ENCODE measurements at regions of chr3 and their contacts with region 1.

Region 1: DNA sequence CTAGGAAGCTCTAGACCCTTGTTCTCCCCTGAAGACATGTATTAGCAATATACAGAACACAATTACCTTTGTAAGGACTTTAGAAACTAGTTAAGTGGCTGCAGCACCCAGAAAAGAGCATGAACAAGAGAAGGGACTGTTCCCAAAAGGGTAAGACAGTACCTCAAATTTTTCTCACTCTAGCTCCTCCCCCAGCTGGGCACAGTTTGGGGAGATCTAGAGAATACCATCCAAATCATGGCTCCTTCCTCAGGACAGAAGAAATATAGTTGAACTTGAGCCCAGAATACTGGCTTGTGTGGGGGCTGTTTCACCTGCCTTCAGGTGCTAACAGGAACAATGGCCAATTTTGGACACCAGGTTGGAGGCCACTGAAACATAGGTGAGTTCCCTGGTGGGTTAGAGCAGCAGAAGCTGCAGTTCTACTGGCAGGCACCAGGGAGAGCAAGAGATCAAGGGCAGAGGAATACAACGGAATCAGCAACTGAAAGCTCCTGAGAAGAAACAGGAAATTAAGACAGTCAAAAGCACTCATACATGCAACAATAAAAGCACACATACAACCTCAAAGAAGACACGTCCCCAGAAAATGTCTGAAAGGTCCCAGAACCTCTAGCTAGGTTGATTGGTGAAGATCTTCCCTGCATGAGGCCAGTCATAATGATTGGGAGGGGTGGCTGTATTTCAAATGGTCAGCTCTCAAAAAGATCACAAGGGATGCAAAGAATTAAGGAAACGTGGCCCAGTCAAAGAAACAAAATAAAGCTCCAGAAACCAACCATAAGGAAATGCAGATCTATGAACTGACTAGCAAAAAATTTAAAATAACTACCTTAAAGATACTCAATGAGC is 104.9 kb upstream of the ASB14 start:
- DNase-seq: peak; percentile 62
- ATAC-seq: peak; percentile 99
- H3K4me3 Mint-ChIP-seq: no peak overlapping the region
- H3K27ac Mint-ChIP-seq: peak overlapping the region; percentile 73
- H3K4me1 Mint-ChIP-seq: peaks cover 14% of the 10 kb centered on the region
- H3K27me3 Mint-ChIP-seq: peaks cover 2% of the 10 kb centered on the region
- CTCF ChIP-seq: peak; percentile 87

Region 2: GRCh38 chr3:57382933-57383332 is 14.5 kb before region 1 on chr3:
- CTCF ChIA-PET with region 1: interaction called, 16 read pairs
- POLR2A ChIA-PET with region 1: no interaction called
- intact Hi-C with region 1: no loop called
- DNase-seq: no peak
- ATAC-seq: no peak
- H3K4me3 Mint-ChIP-seq: no peak overlapping the region
- H3K27ac Mint-ChIP-seq: no peak overlapping the region
- H3K4me1 Mint-ChIP-seq: no peaks in the 10 kb centered on the region
- H3K27me3 Mint-ChIP-seq: peaks cover 4% of the 10 kb centered on the region
- CTCF ChIP-seq: no peak

Region 3: DNA sequence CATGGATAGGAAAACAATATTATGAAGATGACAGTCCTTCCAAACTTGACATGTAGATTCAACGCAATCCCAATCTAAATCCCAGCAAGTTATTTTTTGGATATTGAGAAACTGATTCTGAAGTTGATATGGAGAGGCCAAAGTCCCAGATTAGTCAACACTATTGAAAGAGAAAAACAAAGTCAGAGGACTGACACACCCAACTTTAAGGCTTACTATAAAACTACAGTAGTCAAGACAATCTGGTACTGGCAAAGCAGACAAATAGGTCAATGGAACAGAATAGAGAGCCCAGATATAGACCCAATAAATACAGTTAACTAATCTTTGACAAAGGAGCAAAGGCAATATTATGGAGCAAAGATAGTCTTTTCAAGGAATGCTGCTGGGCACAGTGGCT is 14.3 kb after region 1 on chr3:
- CTCF ChIA-PET with region 1: interaction called, 16 read pairs
- POLR2A ChIA-PET with region 1: no interaction called
- intact Hi-C with region 1: no loop called
- DNase-seq: no peak
- ATAC-seq: no peak
- H3K4me3 Mint-ChIP-seq: no peak overlapping the region
- H3K27ac Mint-ChIP-seq: no peak overlapping the region
- H3K4me1 Mint-ChIP-seq: no peaks in the 10 kb centered on the region
- H3K27me3 Mint-ChIP-seq: peaks cover 2% of the 10 kb centered on the region
- CTCF ChIP-seq: no peak

Region 4: DNA sequence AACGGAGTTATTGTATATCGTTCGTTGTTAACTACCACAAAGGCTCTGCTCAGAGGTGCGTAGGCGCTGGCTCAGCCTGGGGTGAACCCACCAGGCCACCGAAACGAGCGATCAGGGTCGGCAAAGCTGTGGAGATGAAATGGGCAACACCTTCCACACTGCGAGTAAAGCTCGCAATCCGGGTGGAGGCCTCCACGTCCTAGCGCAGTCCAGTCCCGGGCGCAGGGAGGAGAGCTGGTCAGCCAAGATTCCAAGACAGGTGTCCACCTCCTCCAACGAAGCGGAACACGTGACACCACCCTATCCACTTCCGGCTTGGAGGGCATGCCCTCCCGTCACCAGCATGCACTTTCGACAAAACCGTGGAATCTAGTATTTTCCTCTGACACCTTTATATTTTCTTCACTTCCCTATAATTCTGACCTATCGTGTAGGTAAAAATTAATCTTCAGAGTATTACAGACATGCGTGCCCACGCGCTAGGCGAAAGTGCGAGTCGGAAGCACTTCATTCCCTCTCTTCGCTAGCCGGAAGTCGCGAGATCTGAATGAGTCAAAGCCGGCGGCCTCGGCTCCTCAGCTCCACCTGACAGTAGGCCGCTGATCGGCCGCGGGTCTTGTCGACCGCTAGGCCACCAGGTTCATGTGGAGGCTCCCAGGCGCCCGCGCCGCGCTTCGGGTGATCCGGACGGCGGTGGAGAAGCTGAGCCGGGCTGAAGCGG is 158.5 kb after region 1 on chr3 and contains the start of gene PDE12:
- CTCF ChIA-PET with region 1: interaction called, 14 read pairs
- POLR2A ChIA-PET with region 1: no interaction called
- intact Hi-C with region 1: no loop called
- DNase-seq: peak; percentile 91
- ATAC-seq: peak; percentile 80
- H3K4me3 Mint-ChIP-seq: peak within 1 kb of the TSS; percentile 99
- H3K27ac Mint-ChIP-seq: peak within 1 kb of the TSS; percentile 99
- H3K4me1 Mint-ChIP-seq: peaks cover 24% of the 10 kb centered on the region
- H3K27me3 Mint-ChIP-seq: no peaks in the 10 kb centered on the region
- CTCF ChIP-seq: no peak
- total RNA-seq, gene PDE12: 25.4 to 29.9 TPM

Region 5: GRCh38 chr3:57852896-57853295 is 455.5 kb after region 1 on chr3:
- CTCF ChIA-PET with region 1: interaction called, 18 read pairs
- POLR2A ChIA-PET with region 1: no interaction called
- intact Hi-C with region 1: no loop called
- DNase-seq: no peak
- ATAC-seq: no peak
- H3K4me3 Mint-ChIP-seq: no peak overlapping the region
- H3K27ac Mint-ChIP-seq: no peak overlapping the region
- H3K4me1 Mint-ChIP-seq: no peaks in the 10 kb centered on the region
- H3K27me3 Mint-ChIP-seq: no peaks in the 10 kb centered on the region
- CTCF ChIP-seq: no peak